ENCODE measurements at regions of chr2 and their contacts with region 1.

Region 1: GRCh38 chr2:27281855-27282559 is at the start of gene TRIM54:
- DNase-seq: no peak
- ATAC-seq: no peak
- H3K4me3 ChIP-seq: no peak within 1 kb of the TSS
- H3K4me3 Mint-ChIP-seq: no peak within 1 kb of the TSS
- H3K27ac ChIP-seq: no peak within 1 kb of the TSS
- H3K27ac Mint-ChIP-seq: no peak within 1 kb of the TSS
- H3K4me1 ChIP-seq: no peaks in the 10 kb centered on the region
- H3K4me1 Mint-ChIP-seq: no peaks in the 10 kb centered on the region
- H3K27me3 ChIP-seq: no peaks in the 10 kb centered on the region
- H3K27me3 Mint-ChIP-seq: peaks cover 25% of the 10 kb centered on the region
- CTCF ChIP-seq: no peak
- total RNA-seq, gene TRIM54: not detected

Region 2: GRCh38 chr2:26846328-26847306 is 435.4 kb before region 1 on chr2:
- CTCF ChIA-PET with region 1: interaction called, 4 read pairs
- POLR2A ChIA-PET with region 1: no interaction called
- intact Hi-C with region 1: loop called (anchors 5 to 10 kb)
- DNase-seq: peak in 8 of 9 experiments; percentile 31 to 77 (median 60)
- ATAC-seq: peak; percentile 81
- H3K4me3 ChIP-seq: no peak overlapping the region
- H3K4me3 Mint-ChIP-seq: peak overlapping the region; percentile 75
- H3K27ac ChIP-seq: no peak overlapping the region
- H3K27ac Mint-ChIP-seq: no peak overlapping the region
- H3K4me1 ChIP-seq: peaks cover 32% of the 10 kb centered on the region
- H3K4me1 Mint-ChIP-seq: peaks cover 20% of the 10 kb centered on the region
- H3K27me3 ChIP-seq: peaks cover 31 to 43% of the 10 kb centered on the region in 2 experiments
- H3K27me3 Mint-ChIP-seq: peaks cover 57% of the 10 kb centered on the region
- CTCF ChIP-seq: peak; percentile 56

Region 3: DNA sequence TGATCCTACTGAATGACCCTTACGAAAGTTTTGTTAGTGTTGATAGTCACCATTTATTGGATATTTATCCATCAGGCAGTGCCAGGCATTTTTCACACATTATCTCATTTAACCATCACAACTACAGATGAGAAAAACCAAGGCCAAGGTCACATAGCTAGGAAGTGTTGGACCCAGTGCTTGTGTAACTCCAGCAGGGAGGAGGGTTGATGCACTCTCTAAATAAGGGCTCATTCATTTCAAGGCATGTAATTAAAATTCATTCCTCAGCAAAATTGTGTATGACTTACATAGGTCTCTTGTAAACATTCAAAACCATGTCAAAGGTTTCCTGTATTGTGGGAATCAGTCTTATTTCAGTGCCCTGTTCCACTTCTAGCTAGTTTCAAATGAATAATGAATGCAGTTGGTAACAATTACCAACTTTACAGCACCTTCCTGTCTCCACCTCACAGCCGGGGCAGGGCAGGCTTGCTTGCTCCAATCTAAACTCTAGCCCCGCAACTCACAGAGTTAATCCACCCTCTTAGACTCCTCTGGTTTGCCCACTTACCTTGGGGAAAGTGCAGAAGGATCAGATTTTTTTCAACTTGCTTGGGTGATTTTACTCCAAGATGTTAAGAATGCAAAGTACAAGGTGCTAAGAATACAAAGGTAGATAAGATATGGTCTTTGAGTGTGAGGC is 317.4 kb before region 1 on chr2:
- CTCF ChIA-PET with region 1: interaction called, 107 read pairs
- POLR2A ChIA-PET with region 1: interaction called, 5 read pairs
- intact Hi-C with region 1: loop called (anchors 1 kb)
- DNase-seq: no peak
- ATAC-seq: no peak
- H3K4me3 ChIP-seq: no peak overlapping the region
- H3K4me3 Mint-ChIP-seq: no peak overlapping the region
- H3K27ac ChIP-seq: no peak overlapping the region
- H3K27ac Mint-ChIP-seq: no peak overlapping the region
- H3K4me1 ChIP-seq: no peaks in the 10 kb centered on the region
- H3K4me1 Mint-ChIP-seq: peaks cover 10% of the 10 kb centered on the region
- H3K27me3 ChIP-seq: no peaks in the 10 kb centered on the region
- H3K27me3 Mint-ChIP-seq: peaks cover 40% of the 10 kb centered on the region
- CTCF ChIP-seq: no peak

Region 4: GRCh38 chr2:27102329-27102728 is 179.7 kb before region 1 on chr2:
- CTCF ChIA-PET with region 1: interaction called, 40 read pairs
- POLR2A ChIA-PET with region 1: no interaction called
- intact Hi-C with region 1: loop called in 1 of 2 experiments (anchors 1 kb)
- DNase-seq: no peak
- ATAC-seq: no peak
- H3K4me3 ChIP-seq: no peak overlapping the region
- H3K4me3 Mint-ChIP-seq: no peak overlapping the region
- H3K27ac ChIP-seq: no peak overlapping the region
- H3K27ac Mint-ChIP-seq: no peak overlapping the region
- H3K4me1 ChIP-seq: no peaks in the 10 kb centered on the region
- H3K4me1 Mint-ChIP-seq: no peaks in the 10 kb centered on the region
- H3K27me3 ChIP-seq: peaks cover 0 to 3% of the 10 kb centered on the region in 2 experiments
- H3K27me3 Mint-ChIP-seq: peaks cover 16% of the 10 kb centered on the region
- CTCF ChIP-seq: no peak

Region 5: DNA sequence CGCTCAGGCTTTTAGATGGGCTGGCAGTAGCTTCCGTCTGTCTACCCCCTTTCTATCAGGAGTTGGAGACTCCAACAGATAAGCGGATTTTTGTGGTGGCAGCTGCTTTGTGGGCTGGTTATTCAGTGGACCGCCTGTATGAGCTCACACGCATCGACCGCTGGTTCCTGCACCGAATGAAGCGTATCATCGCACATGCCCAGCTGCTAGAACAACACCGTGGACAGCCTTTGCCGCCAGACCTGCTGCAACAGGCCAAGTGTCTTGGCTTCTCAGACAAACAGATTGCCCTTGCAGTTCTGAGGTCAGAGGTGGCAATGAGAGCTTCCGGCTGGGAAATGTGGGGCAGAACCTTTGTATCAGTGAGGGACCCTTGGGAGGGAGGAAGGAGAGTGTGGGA is 50.1 kb before region 1 on chr2:
- CTCF ChIA-PET with region 1: interaction called, 10 read pairs
- POLR2A ChIA-PET with region 1: no interaction called
- intact Hi-C with region 1: no loop called
- DNase-seq: no peak
- ATAC-seq: no peak
- H3K4me3 ChIP-seq: no peak overlapping the region
- H3K4me3 Mint-ChIP-seq: no peak overlapping the region
- H3K27ac ChIP-seq: no peak overlapping the region
- H3K27ac Mint-ChIP-seq: no peak overlapping the region
- H3K4me1 ChIP-seq: no peaks in the 10 kb centered on the region
- H3K4me1 Mint-ChIP-seq: no peaks in the 10 kb centered on the region
- H3K27me3 ChIP-seq: no peaks in the 10 kb centered on the region
- H3K27me3 Mint-ChIP-seq: no peaks in the 10 kb centered on the region
- CTCF ChIP-seq: no peak

Region 6: GRCh38 chr2:27264753-27265535 is 17.1 kb before region 1 on chr2:
- CTCF ChIA-PET with region 1: interaction called, 73 read pairs
- POLR2A ChIA-PET with region 1: interaction called, 3 read pairs
- intact Hi-C with region 1: no loop called
- DNase-seq: peak; percentile 34 to 89 (median 64)
- ATAC-seq: peak; percentile 66
- H3K4me3 ChIP-seq: peak overlapping the region; percentile 48 to 55
- H3K4me3 Mint-ChIP-seq: peak overlapping the region; percentile 77
- H3K27ac ChIP-seq: no peak overlapping the region
- H3K27ac Mint-ChIP-seq: no peak overlapping the region
- H3K4me1 ChIP-seq: peaks cover 24% of the 10 kb centered on the region
- H3K4me1 Mint-ChIP-seq: peaks cover 26% of the 10 kb centered on the region
- H3K27me3 ChIP-seq: peaks cover 26 to 34% of the 10 kb centered on the region in 2 experiments
- H3K27me3 Mint-ChIP-seq: peaks cover 38% of the 10 kb centered on the region
- CTCF ChIP-seq: peak; percentile 54

Region 7: GRCh38 chr2:27303093-27304025 is 21.4 kb after region 1 on chr2:
- CTCF ChIA-PET with region 1: interaction called, 34 read pairs
- POLR2A ChIA-PET with region 1: no interaction called
- intact Hi-C with region 1: no loop called
- DNase-seq: peak in 5 of 9 experiments; percentile 43 to 76 (median 52)
- ATAC-seq: peak; percentile 69
- H3K4me3 ChIP-seq: peak overlapping the region; percentile 2 to 45
- H3K4me3 Mint-ChIP-seq: peak overlapping the region; percentile 74
- H3K27ac ChIP-seq: no peak overlapping the region
- H3K27ac Mint-ChIP-seq: no peak overlapping the region
- H3K4me1 ChIP-seq: peaks cover 14% of the 10 kb centered on the region
- H3K4me1 Mint-ChIP-seq: peaks cover 9% of the 10 kb centered on the region
- H3K27me3 ChIP-seq: peaks cover 5 to 6% of the 10 kb centered on the region in 2 experiments
- H3K27me3 Mint-ChIP-seq: peaks cover 28% of the 10 kb centered on the region
- CTCF ChIP-seq: peak; percentile 90

Region 8: GRCh38 chr2:27335311-27335710 is 53.3 kb after region 1 on chr2:
- CTCF ChIA-PET with region 1: no interaction called
- POLR2A ChIA-PET with region 1: no interaction called
- intact Hi-C with region 1: no loop called
- DNase-seq: no peak
- ATAC-seq: no peak
- H3K4me3 ChIP-seq: no peak overlapping the region
- H3K4me3 Mint-ChIP-seq: no peak overlapping the region
- H3K27ac ChIP-seq: no peak overlapping the region
- H3K27ac Mint-ChIP-seq: no peak overlapping the region
- H3K4me1 ChIP-seq: no peaks in the 10 kb centered on the region
- H3K4me1 Mint-ChIP-seq: no peaks in the 10 kb centered on the region
- H3K27me3 ChIP-seq: no peaks in the 10 kb centered on the region
- H3K27me3 Mint-ChIP-seq: no peaks in the 10 kb centered on the region
- CTCF ChIP-seq: no peak

Measured in CD8-positive, alpha-beta T cell (primary cell).